ENCODE measurements at regions of chr4 and their contacts with region 1.

Region 1: GRCh38 chr4:57110640-57111511 is 691 bp upstream of the IGFBP7 start:
- DNase-seq: peak in 1 of 2 experiments; percentile 14
- H3K4me3 ChIP-seq: no peak overlapping the region
- H3K27ac ChIP-seq: no peak overlapping the region
- H3K4me1 ChIP-seq: no peaks in the 10 kb centered on the region
- H3K27me3 ChIP-seq: no peaks in the 10 kb centered on the region
- CTCF ChIP-seq: no peak

Region 2: DNA sequence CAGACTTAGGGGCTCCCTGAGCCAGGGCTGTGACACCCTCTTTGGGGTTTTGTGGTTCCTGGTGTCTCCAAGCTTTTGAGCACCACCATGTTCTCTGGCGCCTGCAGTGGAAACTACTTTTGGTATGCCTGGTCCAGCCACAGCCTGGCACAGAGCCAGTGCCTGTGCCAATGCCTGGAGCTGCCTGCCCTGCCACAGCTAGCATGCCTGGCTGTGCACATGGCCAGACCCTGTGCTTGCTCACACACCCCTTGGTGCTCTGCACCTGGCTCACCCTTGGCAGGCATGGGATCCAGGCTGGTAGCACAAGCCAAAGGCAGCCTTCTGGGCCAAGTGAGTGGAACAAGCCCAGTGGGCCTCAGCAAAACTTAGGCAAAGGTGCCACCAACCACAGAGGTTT is 398.8 kb before region 1 on chr4:
- CTCF ChIA-PET with region 1: no interaction called
- POLR2A ChIA-PET with region 1: no interaction called
- intact Hi-C with region 1: no loop called
- DNase-seq: no peak
- H3K4me3 ChIP-seq: no peak overlapping the region
- H3K27ac ChIP-seq: no peak overlapping the region
- H3K4me1 ChIP-seq: no peaks in the 10 kb centered on the region
- H3K27me3 ChIP-seq: no peaks in the 10 kb centered on the region
- CTCF ChIP-seq: no peak

Region 3: GRCh38 chr4:57080781-57081650 is 29.9 kb before region 1 on chr4:
- CTCF ChIA-PET with region 1: no interaction called
- POLR2A ChIA-PET with region 1: interaction called, 4 read pairs
- intact Hi-C with region 1: loop called (anchors 2 kb)
- DNase-seq: peak in 1 of 2 experiments; percentile 47
- H3K4me3 ChIP-seq: no peak overlapping the region
- H3K27ac ChIP-seq: peak overlapping the region; percentile 39
- H3K4me1 ChIP-seq: peaks cover 11% of the 10 kb centered on the region; the same call in 1 of the 2 replicates
- H3K27me3 ChIP-seq: no peaks in the 10 kb centered on the region
- CTCF ChIP-seq: no peak

Region 4: DNA sequence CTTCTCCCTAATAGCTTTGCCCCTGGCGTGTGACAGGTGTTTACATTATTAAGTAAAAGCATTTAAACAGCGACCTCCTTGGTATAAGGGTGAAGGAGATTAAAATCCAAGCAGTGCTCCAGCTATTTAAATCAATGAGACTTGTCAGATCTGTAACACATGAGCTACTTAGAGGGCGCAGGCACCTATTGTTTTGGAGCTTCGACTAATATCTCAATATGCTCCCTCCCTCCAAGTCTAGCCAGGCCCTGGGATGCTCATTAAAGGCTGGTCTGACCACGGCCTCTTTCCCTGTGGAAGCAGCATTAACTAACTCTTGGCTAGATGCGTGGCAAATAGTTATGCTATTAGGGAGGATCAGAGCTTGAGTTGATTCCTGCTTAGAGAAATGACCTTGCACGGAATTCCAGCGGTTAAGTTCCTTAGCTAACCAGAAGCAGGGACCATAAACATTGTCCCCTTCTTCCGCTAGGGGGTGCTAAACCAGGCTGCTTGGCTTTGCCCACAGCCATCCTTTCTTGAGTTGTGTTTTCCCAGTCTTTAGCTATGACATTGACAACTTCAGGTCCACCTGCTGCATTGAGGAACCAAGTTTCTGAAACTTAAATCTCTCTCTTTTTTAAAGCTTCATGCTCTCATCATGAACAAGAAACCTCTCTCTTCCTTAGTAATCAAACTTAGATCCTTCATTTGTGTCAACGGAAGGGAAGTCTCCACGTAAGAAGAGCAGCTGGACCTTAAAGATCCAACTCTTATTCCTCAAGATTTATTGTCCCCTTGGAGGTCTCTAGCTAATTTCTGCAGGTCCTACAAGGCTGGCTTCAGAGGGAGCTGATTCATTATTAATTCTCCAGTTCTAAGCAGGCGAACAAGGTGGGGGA is 80.0 kb after region 1 on chr4:
- CTCF ChIA-PET with region 1: no interaction called
- POLR2A ChIA-PET with region 1: no interaction called
- intact Hi-C with region 1: no loop called
- DNase-seq: peak in 1 of 2 experiments; percentile 2
- H3K4me3 ChIP-seq: no peak overlapping the region
- H3K27ac ChIP-seq: no peak overlapping the region
- H3K4me1 ChIP-seq: no peaks in the 10 kb centered on the region
- H3K27me3 ChIP-seq: no peaks in the 10 kb centered on the region
- CTCF ChIP-seq: peak; percentile 55

Measured in PC-9 (cell line).